Cardiac septum (tissue), 1 donor: ENCODE measurements at regions of chr17 and their contacts with region 1.

Region 1: DNA sequence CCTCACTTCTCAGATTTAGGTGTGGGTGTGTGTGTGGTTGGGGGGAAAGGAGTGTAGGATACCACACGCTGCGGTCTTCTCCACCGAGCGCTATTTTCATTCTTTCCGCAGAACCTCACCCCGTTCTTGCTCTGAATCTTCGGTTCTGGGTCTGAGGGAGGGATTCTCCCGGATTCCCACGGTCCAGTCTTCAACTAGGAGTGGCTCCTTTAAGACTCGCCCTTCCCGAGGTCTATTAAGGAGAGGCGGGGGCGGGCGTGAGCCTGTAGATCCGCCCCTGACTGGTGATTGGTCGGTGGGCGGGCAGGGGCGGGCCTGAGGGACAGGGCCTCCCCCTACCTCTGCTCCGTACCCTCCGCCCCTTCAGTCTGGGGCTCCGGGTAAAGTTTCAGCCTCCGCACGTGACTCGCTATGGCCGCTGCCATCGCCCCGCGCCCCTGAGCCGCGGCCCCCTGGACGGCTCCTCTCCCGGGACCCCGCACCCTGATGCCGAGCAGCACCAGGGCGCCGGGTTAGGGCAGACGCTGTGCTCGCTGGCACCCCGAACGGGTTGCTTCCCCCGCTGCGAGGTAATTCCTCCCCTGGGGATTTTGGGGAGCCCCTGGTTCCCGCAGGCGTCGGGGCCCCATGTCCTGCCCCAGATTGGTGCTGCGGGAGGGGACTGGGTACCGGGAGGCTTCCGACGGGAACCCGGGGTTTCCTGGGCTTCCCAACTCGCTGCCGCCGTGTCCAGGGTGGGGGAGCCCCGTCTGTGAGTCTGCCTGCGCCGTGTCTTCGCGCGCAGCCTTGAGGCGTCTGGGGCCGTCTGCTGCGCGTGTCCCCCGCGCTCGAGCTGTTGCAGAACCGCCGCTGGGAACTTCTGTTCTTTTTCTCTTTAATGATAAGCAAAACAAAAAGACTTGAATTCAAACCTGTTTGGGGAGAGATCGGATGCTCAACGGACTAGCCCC is 9.2 kb downstream of the RARA start:
- DNase-seq: peak; percentile 98

Region 2: GRCh38 chr17:40340880-40341807 is 23.0 kb after region 1 on chr17:
- intact Hi-C with region 1: loop called (anchors 1 kb)
- DNase-seq: peak; percentile 98